ENCODE measurements at regions of chr4 and their contacts with region 1.

Region 1: GRCh38 chr4:145618932-145619638 is at the start of gene MMAA:
- DNase-seq: peak; percentile 96 to 97
- ATAC-seq: peak; percentile 99 to 100 (median 100)
- H3K4me3 ChIP-seq: peak within 1 kb of the TSS; percentile 63 to 92 (median 78)
- H3K27ac ChIP-seq: peak within 1 kb of the TSS; percentile 85 to 99 (median 96)
- H3K4me1 ChIP-seq: peaks cover 0 to 39% (median 16%) of the 10 kb centered on the region in 9 donors
- H3K27me3 ChIP-seq: no peaks in the 10 kb centered on the region
- CTCF ChIP-seq: peak; percentile 48 to 81 (median 75)
- total RNA-seq, gene MMAA: 6.6 to 13.5 (median 9.8) TPM

Region 2: GRCh38 chr4:145180298-145181090 is 438.6 kb before region 1 on chr4 and contains the start of gene OTUD4:
- intact Hi-C with region 1: loop called in 1 of 10 experiments (anchors 5 kb)
- DNase-seq: peak; percentile 94 to 96
- ATAC-seq: peak; percentile 96 to 98 (median 97)
- H3K4me3 ChIP-seq: peak within 1 kb of the TSS; percentile 60 to 91 (median 84)
- H3K27ac ChIP-seq: peak within 1 kb of the TSS; percentile 92 to 99 (median 97)
- H3K4me1 ChIP-seq: peaks cover 4 to 45% (median 28%) of the 10 kb centered on the region in 9 donors
- H3K27me3 ChIP-seq: no peaks in the 10 kb centered on the region
- CTCF ChIP-seq: peak in 4 of 9 donors; percentile 27 to 37 (median 32)
- total RNA-seq, gene OTUD4: 22.5 to 36.7 (median 26.9) TPM

Region 3: DNA sequence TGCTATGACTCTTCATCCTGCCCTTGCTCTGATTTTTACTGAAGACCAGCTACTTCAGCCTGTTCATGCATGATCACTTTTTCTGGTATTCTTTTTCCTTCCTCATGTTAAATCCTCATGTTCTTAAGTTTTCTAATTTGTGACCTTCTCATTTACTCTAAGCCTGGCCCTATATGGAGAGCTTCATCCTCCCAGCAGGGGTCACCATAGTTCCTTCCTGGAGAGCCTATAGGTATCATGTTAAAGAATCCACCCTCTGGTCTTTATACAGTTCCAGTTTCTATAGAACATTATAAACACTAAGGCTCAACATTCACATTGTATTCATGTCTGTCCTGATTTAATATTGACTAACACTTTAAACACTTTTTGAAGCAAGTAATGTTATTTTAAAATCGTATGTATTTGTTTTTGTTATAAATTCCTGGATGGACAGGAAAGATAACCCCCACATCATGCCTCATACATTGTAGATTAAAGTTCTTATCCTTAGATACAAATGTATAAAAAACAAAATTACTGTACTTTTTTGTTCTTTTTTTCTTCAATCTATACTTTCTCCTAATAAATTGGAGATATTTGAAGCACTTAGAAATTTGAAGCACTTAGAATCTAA is 384.9 kb before region 1 on chr4:
- intact Hi-C with region 1: loop called in 6 of 10 experiments (anchors 5 kb)
- DNase-seq: peak in 1 of 2 donors; percentile 34
- ATAC-seq: peak in 7 of 8 donors; percentile 64 to 81 (median 72)
- H3K4me3 ChIP-seq: no peak overlapping the region
- H3K27ac ChIP-seq: no peak overlapping the region
- H3K4me1 ChIP-seq: no peaks in the 10 kb centered on the region
- H3K27me3 ChIP-seq: no peaks in the 10 kb centered on the region
- CTCF ChIP-seq: peak; percentile 63 to 88 (median 81)

Region 4: DNA sequence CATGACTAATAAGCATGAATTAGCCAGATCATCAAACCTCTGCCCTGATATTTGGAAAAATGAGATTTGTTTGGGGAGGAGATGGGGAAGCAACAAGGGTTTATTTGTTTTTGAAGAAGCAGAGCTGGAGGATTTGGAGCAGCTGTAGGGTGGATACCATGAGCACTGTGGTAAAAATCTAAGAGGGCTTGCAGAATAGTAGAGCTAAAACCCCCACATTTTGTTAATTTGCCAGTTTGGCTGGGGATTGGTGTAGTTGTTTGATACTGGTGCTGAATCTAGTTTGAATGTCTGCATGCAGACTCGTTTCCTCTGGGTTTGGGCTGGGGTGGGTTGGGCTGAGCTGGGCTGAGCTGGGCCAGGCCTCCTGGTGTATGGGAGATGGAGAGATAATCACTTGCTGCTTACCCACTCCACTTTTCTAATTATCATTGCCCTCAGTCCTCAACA is 93.8 kb before region 1 on chr4:
- intact Hi-C with region 1: no loop called
- DNase-seq: no peak
- ATAC-seq: peak in 5 of 8 donors; percentile 53 to 70 (median 57)
- H3K4me3 ChIP-seq: peak overlapping the region in 2 of 10 donors; percentile 3 to 5
- H3K27ac ChIP-seq: peak overlapping the region in 7 of 10 donors; percentile 22 to 68 (median 34)
- H3K4me1 ChIP-seq: peaks cover 0 to 56% (median 40%) of the 10 kb centered on the region in 9 donors
- H3K27me3 ChIP-seq: no peaks in the 10 kb centered on the region
- CTCF ChIP-seq: no peak

Region 5: GRCh38 chr4:145694929-145695328 is 75.8 kb after region 1 on chr4:
- intact Hi-C with region 1: no loop called
- DNase-seq: no peak
- ATAC-seq: no peak
- H3K4me3 ChIP-seq: no peak overlapping the region
- H3K27ac ChIP-seq: no peak overlapping the region
- H3K4me1 ChIP-seq: peaks cover 0 to 3% (median 0%) of the 10 kb centered on the region in 9 donors
- H3K27me3 ChIP-seq: no peaks in the 10 kb centered on the region
- CTCF ChIP-seq: no peak

Region 6: DNA sequence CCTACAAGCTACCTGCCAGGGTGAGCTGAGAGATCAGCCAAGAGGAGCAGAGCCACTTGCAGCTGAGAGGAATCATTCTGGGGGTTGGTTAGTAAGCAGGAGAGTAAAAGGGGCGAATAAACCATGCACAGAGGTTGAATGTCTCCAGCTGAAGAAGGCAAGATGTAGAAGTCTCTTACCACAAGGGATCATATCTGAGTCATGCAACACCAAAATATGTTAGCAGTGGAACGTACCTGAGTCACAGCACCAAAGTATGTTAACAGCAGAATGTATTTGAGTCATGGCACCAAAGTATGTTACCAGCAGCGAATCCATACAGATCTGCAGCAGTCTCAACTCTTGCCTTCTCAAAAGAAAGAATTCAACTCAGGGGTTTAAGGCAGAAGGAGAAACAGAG is 90.8 kb after region 1 on chr4:
- intact Hi-C with region 1: loop called in 1 of 10 experiments (anchors 10 kb)
- DNase-seq: no peak
- ATAC-seq: no peak
- H3K4me3 ChIP-seq: no peak overlapping the region
- H3K27ac ChIP-seq: no peak overlapping the region
- H3K4me1 ChIP-seq: peaks cover 0 to 11% (median 0%) of the 10 kb centered on the region in 9 donors
- H3K27me3 ChIP-seq: no peaks in the 10 kb centered on the region
- CTCF ChIP-seq: no peak

Region 7: GRCh38 chr4:145808021-145808650 is 189.1 kb after region 1 on chr4:
- intact Hi-C with region 1: loop called in 1 of 10 experiments (anchors 10 kb)
- DNase-seq: peak in 1 of 2 donors; percentile 7
- ATAC-seq: peak; percentile 31 to 81 (median 72)
- H3K4me3 ChIP-seq: no peak overlapping the region
- H3K27ac ChIP-seq: peak overlapping the region in 7 of 10 donors; percentile 39 to 78 (median 61)
- H3K4me1 ChIP-seq: peaks cover 0 to 50% (median 39%) of the 10 kb centered on the region in 9 donors
- H3K27me3 ChIP-seq: no peaks in the 10 kb centered on the region
- CTCF ChIP-seq: no peak

Region 8: GRCh38 chr4:145887241-145887991 is 268.3 kb after region 1 on chr4:
- intact Hi-C with region 1: loop called in 1 of 10 experiments (anchors 10 kb)
- DNase-seq: peak in 1 of 2 donors; percentile 26
- ATAC-seq: peak; percentile 51 to 76 (median 72)
- H3K4me3 ChIP-seq: peak overlapping the region in 2 of 10 donors; percentile 5 to 18
- H3K27ac ChIP-seq: peak overlapping the region in 9 of 10 donors; percentile 8 to 78 (median 59)
- H3K4me1 ChIP-seq: peaks cover 5 to 29% (median 24%) of the 10 kb centered on the region in 9 donors
- H3K27me3 ChIP-seq: no peaks in the 10 kb centered on the region
- CTCF ChIP-seq: peak in 5 of 9 donors; percentile 20 to 56 (median 44)

Measured in heart right ventricle (tissue), 16 donors.